ENCODE measurements at regions of chr14 and their contacts with region 1.

Region 1: DNA sequence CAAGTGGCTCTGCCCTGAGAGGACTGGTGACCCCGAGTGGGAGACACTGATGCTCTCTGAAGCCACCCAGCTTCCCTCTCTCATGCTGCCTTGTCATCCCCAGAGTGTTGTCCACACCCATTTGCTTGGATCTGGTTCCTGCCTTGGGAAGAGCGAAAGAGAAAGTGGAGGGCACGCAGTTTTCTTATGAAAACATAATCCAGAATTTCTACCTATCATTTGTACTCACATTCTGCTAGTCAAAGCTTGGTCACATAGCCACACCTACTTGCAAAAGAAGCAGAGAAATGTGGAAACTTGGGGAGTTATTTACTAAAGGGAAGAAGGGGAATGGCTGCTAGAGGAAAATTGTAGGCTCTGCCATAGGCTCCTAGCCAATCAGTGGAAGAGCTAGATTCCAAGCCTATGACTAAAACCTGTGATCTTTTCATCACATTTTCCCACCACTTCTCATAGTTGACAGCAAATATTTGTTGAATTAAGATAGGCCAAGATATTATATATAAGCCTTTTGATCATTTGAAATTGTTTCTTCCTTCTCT is 326.3 kb downstream of the ZFP36L1 start:
- DNase-seq: peak; percentile 65 to 100
- H3K4me3 ChIP-seq: peak overlapping the region; percentile 23; the same call in 1 of the 2 replicates
- H3K27ac ChIP-seq: peak overlapping the region; percentile 96
- H3K4me1 ChIP-seq: peaks cover 95% of the 10 kb centered on the region
- H3K27me3 ChIP-seq: no peaks in the 10 kb centered on the region
- CTCF ChIP-seq: no peak

Region 2: GRCh38 chr14:68137704-68138619 is 328.6 kb before region 1 on chr14:
- CTCF ChIA-PET with region 1: no interaction called
- POLR2A ChIA-PET with region 1: no interaction called
- intact Hi-C with region 1: loop called (anchors 10 kb)
- DNase-seq: peak; percentile 88 to 92
- H3K4me3 ChIP-seq: no peak overlapping the region
- H3K27ac ChIP-seq: peak overlapping the region; percentile 57
- H3K4me1 ChIP-seq: peaks cover 58% of the 10 kb centered on the region
- H3K27me3 ChIP-seq: no peaks in the 10 kb centered on the region
- CTCF ChIP-seq: no peak

Region 3: GRCh38 chr14:68295316-68295816 is 171.2 kb before region 1 on chr14:
- CTCF ChIA-PET with region 1: no interaction called
- POLR2A ChIA-PET with region 1: no interaction called
- intact Hi-C with region 1: no loop called
- DNase-seq: no peak
- H3K4me3 ChIP-seq: no peak overlapping the region
- H3K27ac ChIP-seq: no peak overlapping the region
- H3K4me1 ChIP-seq: peaks cover 20% of the 10 kb centered on the region
- H3K27me3 ChIP-seq: no peaks in the 10 kb centered on the region
- CTCF ChIP-seq: no peak

Region 4: GRCh38 chr14:68363843-68364767 is 102.5 kb before region 1 on chr14:
- CTCF ChIA-PET with region 1: no interaction called
- POLR2A ChIA-PET with region 1: no interaction called
- intact Hi-C with region 1: no loop called
- DNase-seq: no peak
- H3K4me3 ChIP-seq: no peak overlapping the region
- H3K27ac ChIP-seq: no peak overlapping the region
- H3K4me1 ChIP-seq: peaks cover 21% of the 10 kb centered on the region
- H3K27me3 ChIP-seq: no peaks in the 10 kb centered on the region
- CTCF ChIP-seq: no peak

Region 5: DNA sequence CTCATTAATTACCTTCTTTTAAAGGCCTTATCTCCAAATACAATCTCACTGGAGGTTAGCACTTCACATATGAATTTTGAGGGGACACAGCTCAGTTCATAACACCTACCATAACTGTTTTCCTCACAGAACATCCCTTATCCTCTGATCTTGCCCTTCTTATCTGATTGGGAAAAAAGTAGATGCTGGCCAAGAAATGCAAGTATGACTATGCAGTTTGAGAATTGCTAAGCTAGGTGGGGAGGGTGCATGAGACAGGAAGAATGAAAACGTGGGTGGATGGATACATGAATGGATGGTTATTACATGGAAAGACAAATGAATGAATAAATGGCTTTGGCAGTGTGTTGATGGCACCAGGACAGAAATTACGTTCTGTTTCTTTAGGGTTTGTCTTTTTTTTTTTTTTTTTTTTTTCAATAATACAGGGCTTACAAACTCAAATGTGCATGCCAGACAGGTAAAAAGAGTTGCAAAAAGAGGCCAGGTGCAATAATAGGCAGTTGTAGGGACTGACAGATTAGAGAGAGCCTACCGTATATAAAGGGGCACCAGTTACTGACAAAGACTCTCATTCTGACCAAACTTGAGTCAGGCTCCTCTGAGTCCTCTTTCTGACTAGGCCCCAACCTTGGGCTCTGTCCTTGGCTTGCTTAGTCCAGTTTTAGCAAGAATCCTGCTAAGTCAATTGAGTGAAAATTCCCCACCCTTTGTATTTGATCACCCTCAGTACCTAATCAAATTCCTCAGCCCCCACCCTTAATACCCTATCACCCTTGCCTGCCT is 21.4 kb after region 1 on chr14:
- CTCF ChIA-PET with region 1: no interaction called
- POLR2A ChIA-PET with region 1: no interaction called
- intact Hi-C with region 1: loop called (anchors 2 kb)
- DNase-seq: peak; percentile 40 to 61
- H3K4me3 ChIP-seq: no peak overlapping the region
- H3K27ac ChIP-seq: peak overlapping the region; percentile 27; the same call in 1 of the 2 replicates
- H3K4me1 ChIP-seq: peaks cover 18% of the 10 kb centered on the region
- H3K27me3 ChIP-seq: no peaks in the 10 kb centered on the region
- CTCF ChIP-seq: no peak

Region 6: DNA sequence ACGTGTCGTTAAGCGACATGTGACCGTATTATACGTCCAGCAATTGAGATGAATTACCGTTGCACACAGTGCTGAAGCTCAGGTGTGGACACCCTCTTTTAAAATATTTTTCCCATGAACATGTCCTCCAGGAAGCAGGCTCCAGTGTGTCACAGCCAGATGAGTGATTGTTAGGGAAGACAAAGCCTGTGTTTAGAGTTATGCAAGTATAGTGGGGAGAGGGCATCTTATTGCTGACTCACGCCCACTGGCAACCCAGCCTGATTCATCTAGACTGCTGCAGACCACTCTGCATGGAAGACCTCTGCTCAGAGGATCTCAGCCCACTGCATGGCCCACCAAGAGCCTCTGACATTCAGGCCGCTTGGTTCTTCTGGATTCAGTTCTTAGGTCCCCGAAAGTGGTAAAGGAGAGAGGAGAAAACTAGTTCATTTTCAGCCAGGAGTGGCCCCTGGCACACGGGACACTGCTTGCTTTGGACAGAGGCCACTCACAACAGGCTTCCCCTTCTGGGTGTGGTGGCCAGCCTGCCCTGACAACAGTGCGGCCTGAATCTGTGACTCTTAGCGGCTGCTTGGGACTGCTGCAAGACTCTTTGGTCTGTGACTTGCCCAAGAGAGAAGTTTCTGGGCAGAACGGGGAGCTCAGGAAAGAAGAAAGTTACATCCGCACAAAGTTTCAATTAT is 60.0 kb after region 1 on chr14:
- CTCF ChIA-PET with region 1: interaction called, 3 read pairs
- POLR2A ChIA-PET with region 1: no interaction called
- intact Hi-C with region 1: loop called (anchors 1 kb)
- DNase-seq: peak; percentile 71 to 74
- H3K4me3 ChIP-seq: no peak overlapping the region
- H3K27ac ChIP-seq: peak overlapping the region; percentile 87
- H3K4me1 ChIP-seq: peaks cover 45% of the 10 kb centered on the region
- H3K27me3 ChIP-seq: no peaks in the 10 kb centered on the region
- CTCF ChIP-seq: no peak